B cell (primary cell): ENCODE measurements at regions of chr10 and their contacts with region 1.

Region 1: DNA sequence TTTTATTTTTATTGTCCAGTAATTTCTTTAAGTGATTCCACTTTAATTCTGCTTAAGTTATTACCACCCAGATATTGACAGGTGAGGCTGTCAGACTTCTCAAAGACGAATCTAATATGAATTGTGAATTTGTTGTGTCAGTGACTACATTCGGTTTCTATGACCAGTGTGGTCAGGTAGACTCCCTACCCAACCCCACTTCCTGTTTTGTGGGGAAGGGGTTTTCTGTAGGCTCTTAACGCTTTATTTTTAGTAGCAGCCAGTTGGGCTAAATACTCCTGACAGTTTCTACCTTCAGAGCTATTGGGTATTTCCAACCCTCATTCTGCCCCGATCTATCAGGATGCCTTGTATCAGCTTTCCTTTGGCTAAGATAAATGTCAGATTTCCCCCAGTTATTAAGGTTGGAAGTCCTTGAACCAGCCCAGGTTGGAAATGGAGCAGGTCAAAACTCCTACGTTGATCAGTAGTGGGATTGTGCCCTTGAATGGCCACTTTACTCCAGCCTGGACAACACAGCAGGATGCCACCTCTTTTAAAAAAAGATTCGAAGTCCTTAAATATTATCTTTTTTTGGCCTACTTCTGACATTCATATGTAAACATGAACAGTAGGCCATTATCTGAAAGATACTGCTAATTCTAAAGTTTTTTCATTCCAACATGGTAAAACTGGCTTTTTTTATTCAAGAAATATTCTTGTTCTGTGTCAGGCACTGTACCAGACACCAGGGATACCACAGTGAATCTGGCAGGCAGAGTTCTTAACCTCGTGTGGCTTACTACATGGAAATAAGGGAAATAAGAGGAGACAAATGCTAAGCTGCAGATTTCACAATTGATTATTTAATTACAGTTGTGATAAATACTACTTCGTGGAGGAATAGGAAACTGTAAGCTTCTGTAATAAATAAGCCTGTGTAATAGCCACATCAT is 133.3 kb upstream of the SAMD8 start:
- DNase-seq: peak; percentile 84
- ATAC-seq: peak; percentile 85
- H3K4me3 ChIP-seq: peak overlapping the region in 3 of 5 experiments; percentile 8 to 40 (median 11)
- H3K4me3 Mint-ChIP-seq: peak overlapping the region; percentile 78
- H3K27ac ChIP-seq: peak overlapping the region; percentile 37 to 66
- H3K27ac Mint-ChIP-seq: peak overlapping the region; percentile 81
- H3K4me1 ChIP-seq: peaks cover 35 to 39% of the 10 kb centered on the region in 2 donors
- H3K4me1 Mint-ChIP-seq: peaks cover 51% of the 10 kb centered on the region
- H3K27me3 ChIP-seq: no peaks in the 10 kb centered on the region
- H3K27me3 Mint-ChIP-seq: no peaks in the 10 kb centered on the region
- CTCF ChIP-seq: no peak

Region 2: GRCh38 chr10:75000748-75001321 is 22.7 kb after region 1 on chr10:
- CTCF ChIA-PET with region 1: interaction called, 4 read pairs
- POLR2A ChIA-PET with region 1: no interaction called
- intact Hi-C with region 1: loop called (anchors 2 kb)
- DNase-seq: peak; percentile 53
- ATAC-seq: peak; percentile 88
- H3K4me3 ChIP-seq: peak overlapping the region in 3 of 5 experiments; percentile 3 to 34 (median 8)
- H3K4me3 Mint-ChIP-seq: peak overlapping the region; percentile 73
- H3K27ac ChIP-seq: peak overlapping the region; percentile 34 to 37
- H3K27ac Mint-ChIP-seq: peak overlapping the region; percentile 79
- H3K4me1 ChIP-seq: peaks cover 20 to 21% of the 10 kb centered on the region in 2 donors
- H3K4me1 Mint-ChIP-seq: peaks cover 28% of the 10 kb centered on the region
- H3K27me3 ChIP-seq: no peaks in the 10 kb centered on the region
- H3K27me3 Mint-ChIP-seq: no peaks in the 10 kb centered on the region
- CTCF ChIP-seq: no peak

Region 3: GRCh38 chr10:75744261-75744660 is 766.1 kb after region 1 on chr10:
- CTCF ChIA-PET with region 1: no interaction called
- POLR2A ChIA-PET with region 1: no interaction called
- intact Hi-C with region 1: no loop called
- DNase-seq: no peak
- ATAC-seq: no peak
- H3K4me3 ChIP-seq: no peak overlapping the region
- H3K4me3 Mint-ChIP-seq: no peak overlapping the region
- H3K27ac ChIP-seq: no peak overlapping the region
- H3K27ac Mint-ChIP-seq: no peak overlapping the region
- H3K4me1 ChIP-seq: no peaks in the 10 kb centered on the region
- H3K4me1 Mint-ChIP-seq: no peaks in the 10 kb centered on the region
- H3K27me3 ChIP-seq: no peaks in the 10 kb centered on the region
- H3K27me3 Mint-ChIP-seq: no peaks in the 10 kb centered on the region
- CTCF ChIP-seq: no peak